HepG2 (cell line): ENCODE measurements at regions of chr2 and their contacts with region 1.

Region 1: GRCh38 chr2:173402405-173402974 is 47.8 kb downstream of the CDCA7 start:
- DNase-seq: peak; percentile 78
- ATAC-seq: peak; percentile 99
- H3K4me3 ChIP-seq: no peak overlapping the region; a peak in 1 of 6 replicates
- H3K27ac ChIP-seq: no peak overlapping the region
- H3K4me1 ChIP-seq: peaks cover 14% of the 10 kb centered on the region
- H3K27me3 ChIP-seq: peaks cover 2 to 35% of the 10 kb centered on the region in 2 experiments; a peak in 3 of 5 replicates
- CTCF ChIP-seq: peak; percentile 98
- EP300 ChIP-seq: no peak
- POLR2A ChIP-seq: no peak
- RAD21 ChIP-seq: peak; percentile 94

Region 2: DNA sequence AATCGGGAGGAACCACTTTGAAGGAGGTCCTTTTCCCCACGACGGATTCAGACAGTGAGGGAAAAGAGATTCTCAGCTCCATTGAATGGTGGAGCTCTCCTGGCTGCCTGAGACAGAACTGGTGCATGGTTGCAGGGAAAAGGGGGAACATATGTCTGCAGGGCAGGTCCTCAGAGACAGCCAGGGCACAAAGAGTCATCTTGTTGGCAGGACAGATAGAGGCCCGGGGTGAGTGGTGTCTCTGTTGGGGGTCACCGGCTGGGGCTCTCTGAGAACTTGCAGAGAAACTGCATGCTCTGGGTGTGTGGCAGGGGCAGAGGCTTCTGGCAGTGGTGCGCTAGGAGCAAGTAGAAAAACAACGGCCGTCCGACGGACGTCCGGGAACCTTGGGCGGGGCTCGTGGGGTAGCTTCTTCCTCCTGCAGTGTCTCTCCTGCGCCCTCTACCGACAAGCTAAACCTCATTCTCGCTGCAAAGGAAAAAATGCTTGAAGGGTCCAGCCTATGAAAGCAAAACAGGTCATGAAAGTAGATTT is 46.5 kb after region 1 on chr2:
- CTCF ChIA-PET with region 1: interaction called, 22 read pairs
- POLR2A ChIA-PET with region 1: no interaction called
- in situ Hi-C with region 1: loop called (anchors 5 kb)
- intact Hi-C with region 1: loop called (anchors 1 kb)
- DNase-seq: peak; percentile 87
- ATAC-seq: peak; percentile 98
- H3K4me3 ChIP-seq: peak overlapping the region; percentile 45 to 70 (median 50); a peak in 5 of 6 replicates
- H3K27ac ChIP-seq: no peak overlapping the region
- H3K4me1 ChIP-seq: 0 out of 2 replicates have a peak, but pooled peaks cover 4% of the 10 kb centered on the region
- H3K27me3 ChIP-seq: peaks cover 0 to 19% of the 10 kb centered on the region in 2 experiments; a peak in 3 of 5 replicates
- CTCF ChIP-seq: peak; percentile 87
- EP300 ChIP-seq: no peak
- POLR2A ChIP-seq: peak in 1 of 2 experiments; percentile 55; a peak in 1 of 4 replicates
- RAD21 ChIP-seq: peak; percentile 73

Region 3: DNA sequence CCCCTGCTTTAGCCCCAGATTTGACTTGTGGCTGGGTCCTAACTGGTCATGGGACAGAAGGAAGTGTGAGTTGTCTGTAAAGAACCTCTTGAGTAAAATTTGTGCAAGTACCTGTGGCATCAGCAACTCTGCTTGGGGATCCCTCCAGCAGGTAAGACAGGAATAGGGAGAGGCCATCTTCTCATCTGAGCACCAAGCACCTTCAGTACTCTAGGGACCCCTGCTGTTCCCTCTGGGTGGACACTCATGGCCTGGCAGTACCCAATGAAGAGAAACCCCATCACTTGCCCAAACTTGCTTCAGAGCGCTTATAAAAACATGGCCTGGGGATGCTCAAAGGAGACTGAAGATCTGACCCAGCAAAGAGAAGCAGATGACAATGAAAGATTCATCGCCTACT is 264.9 kb after region 1 on chr2:
- CTCF ChIA-PET with region 1: no interaction called
- POLR2A ChIA-PET with region 1: no interaction called
- in situ Hi-C with region 1: no loop called
- intact Hi-C with region 1: loop called (anchors 10 kb)
- DNase-seq: peak; percentile 7
- ATAC-seq: peak; percentile 64
- H3K4me3 ChIP-seq: no peak overlapping the region
- H3K27ac ChIP-seq: no peak overlapping the region
- H3K4me1 ChIP-seq: no peaks in the 10 kb centered on the region
- H3K27me3 ChIP-seq: peaks cover 0 to 11% of the 10 kb centered on the region in 2 experiments; a peak in 2 of 5 replicates
- CTCF ChIP-seq: peak; percentile 39; the same call in 1 of the 2 replicates
- EP300 ChIP-seq: no peak
- POLR2A ChIP-seq: no peak
- RAD21 ChIP-seq: no peak

Region 4: GRCh38 chr2:174004905-174005605 is 602.6 kb after region 1 on chr2:
- CTCF ChIA-PET with region 1: no interaction called
- POLR2A ChIA-PET with region 1: no interaction called
- in situ Hi-C with region 1: loop called (anchors 25 kb)
- intact Hi-C with region 1: loop called (anchors 5 kb)
- DNase-seq: no peak
- ATAC-seq: no peak
- H3K4me3 ChIP-seq: no peak overlapping the region
- H3K27ac ChIP-seq: no peak overlapping the region
- H3K4me1 ChIP-seq: peaks cover 27% of the 10 kb centered on the region
- H3K27me3 ChIP-seq: no peaks in the 10 kb centered on the region
- CTCF ChIP-seq: no peak
- EP300 ChIP-seq: no peak
- POLR2A ChIP-seq: no peak
- RAD21 ChIP-seq: no peak

Region 5: DNA sequence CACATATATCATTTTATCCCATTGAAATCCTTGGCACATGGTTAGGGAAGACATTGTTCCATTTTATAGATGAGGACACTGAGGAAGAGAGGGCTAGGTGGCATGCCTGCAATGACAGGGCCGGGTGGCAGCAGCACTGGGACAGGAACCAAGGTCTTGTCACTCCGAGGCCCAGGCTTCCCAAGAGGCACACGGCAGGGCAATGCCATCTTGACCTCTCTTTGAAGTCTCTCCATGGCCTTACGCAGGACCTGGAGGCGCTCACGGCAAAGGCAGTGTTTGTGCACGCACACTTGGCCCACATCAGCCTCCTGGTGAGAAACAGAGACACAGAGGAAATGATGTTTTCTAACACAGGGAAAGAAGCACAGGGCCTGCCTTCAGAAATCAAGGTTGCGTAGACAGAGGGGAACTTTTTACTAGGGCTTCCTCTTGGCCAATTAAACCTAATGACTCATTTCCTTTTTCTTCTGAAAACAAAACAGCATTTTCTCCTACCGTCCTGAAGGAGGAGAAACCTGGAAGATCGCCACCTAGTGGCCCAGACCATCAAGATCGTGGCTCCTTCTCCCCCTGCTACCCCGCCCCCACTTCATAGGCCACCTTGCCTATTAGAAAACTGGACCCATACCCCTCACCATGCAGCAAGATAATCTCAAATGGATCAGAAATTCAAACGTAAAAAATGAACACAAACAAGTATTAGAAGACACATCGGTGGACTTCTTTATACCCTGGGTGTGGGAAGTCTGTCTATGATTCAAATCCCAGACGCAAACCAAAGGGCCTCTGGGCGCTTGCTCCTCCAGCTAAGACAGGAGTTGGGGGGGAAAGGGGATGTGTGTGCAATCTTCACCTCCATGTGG is 637.3 kb after region 1 on chr2:
- CTCF ChIA-PET with region 1: interaction called, 5 read pairs
- POLR2A ChIA-PET with region 1: no interaction called
- in situ Hi-C with region 1: no loop called
- intact Hi-C with region 1: loop called (anchors 1 kb)
- DNase-seq: peak; percentile 88
- ATAC-seq: peak; percentile 90
- H3K4me3 ChIP-seq: peak overlapping the region; percentile 48 to 73 (median 54)
- H3K27ac ChIP-seq: peak overlapping the region; percentile 1
- H3K4me1 ChIP-seq: peaks cover 23% of the 10 kb centered on the region
- H3K27me3 ChIP-seq: peaks cover 0 to 4% of the 10 kb centered on the region in 2 experiments; a peak in 2 of 5 replicates
- CTCF ChIP-seq: peak; percentile 91
- EP300 ChIP-seq: no peak
- POLR2A ChIP-seq: no peak
- RAD21 ChIP-seq: peak; percentile 66